ENCODE measurements at regions of chr1 and their contacts with region 1.

Region 1: DNA sequence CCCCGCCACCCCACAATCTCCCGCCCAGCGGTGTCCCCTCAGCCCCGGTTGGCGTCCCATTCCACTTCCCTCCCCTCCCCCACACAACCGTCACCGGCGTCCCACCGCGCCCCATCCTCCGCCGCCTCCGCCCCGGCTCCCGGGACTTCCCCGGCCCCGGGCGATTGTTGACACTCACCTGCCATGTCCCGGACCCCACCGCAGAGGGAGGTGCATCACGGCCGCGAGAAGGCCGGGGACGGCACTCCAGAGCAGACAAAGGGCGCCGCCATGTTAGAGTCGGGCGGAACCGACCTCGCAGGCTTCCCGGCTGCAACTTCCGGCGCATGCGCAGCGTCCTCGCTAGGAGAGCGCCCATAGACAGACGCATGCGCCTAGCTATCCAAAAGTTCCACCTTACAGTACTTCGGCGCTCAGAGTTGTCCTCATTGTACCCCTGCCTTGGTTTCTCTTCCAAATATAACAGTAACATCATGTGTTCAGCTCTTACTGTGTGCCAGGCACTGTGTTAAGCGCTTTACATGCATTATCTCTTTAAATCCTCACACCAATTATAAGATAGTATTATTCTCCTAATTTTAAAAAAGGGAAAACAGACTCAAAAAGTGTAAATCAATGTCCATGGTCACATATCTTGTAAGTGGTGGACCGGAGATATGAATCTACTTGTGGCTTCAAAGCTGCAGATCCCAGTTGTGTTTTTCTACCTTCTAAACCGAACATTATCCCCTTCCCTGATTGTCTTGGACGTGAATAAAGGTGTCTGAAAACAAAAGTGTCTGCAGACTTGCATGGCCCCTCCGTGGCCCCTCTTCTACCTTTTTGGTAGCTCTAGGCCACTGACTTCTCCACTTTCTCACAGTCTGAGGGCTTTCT is at the start of gene ZBTB17:
- DNase-seq: peak; percentile 95 to 99
- ATAC-seq: peak; percentile 88 to 93 (median 88)
- H3K4me3 ChIP-seq: peak within 1 kb of the TSS; percentile 79
- H3K4me3 Mint-ChIP-seq: peak within 1 kb of the TSS; percentile 95
- H3K27ac ChIP-seq: peak within 1 kb of the TSS; percentile 73
- H3K27ac Mint-ChIP-seq: peak within 1 kb of the TSS; percentile 87 to 92
- H3K4me1 ChIP-seq: peaks cover 13% of the 10 kb centered on the region
- H3K4me1 Mint-ChIP-seq: peaks cover 22 to 34% of the 10 kb centered on the region in 2 donors
- H3K27me3 ChIP-seq: no peaks in the 10 kb centered on the region
- H3K27me3 Mint-ChIP-seq: no peaks in the 10 kb centered on the region
- CTCF ChIP-seq: no peak
- total RNA-seq, gene ZBTB17: 86.0 to 100 (median 86.9) TPM

Region 2: GRCh38 chr1:15749399-15750291 is 226.4 kb before region 1 on chr1:
- intact Hi-C with region 1: no loop called
- DNase-seq: no peak
- ATAC-seq: no peak
- H3K4me3 ChIP-seq: no peak overlapping the region
- H3K4me3 Mint-ChIP-seq: no peak overlapping the region
- H3K27ac ChIP-seq: no peak overlapping the region
- H3K27ac Mint-ChIP-seq: no peak overlapping the region
- H3K4me1 ChIP-seq: no peaks in the 10 kb centered on the region
- H3K4me1 Mint-ChIP-seq: no peaks in the 10 kb centered on the region
- H3K27me3 ChIP-seq: no peaks in the 10 kb centered on the region
- H3K27me3 Mint-ChIP-seq: no peaks in the 10 kb centered on the region
- CTCF ChIP-seq: no peak

Region 3: DNA sequence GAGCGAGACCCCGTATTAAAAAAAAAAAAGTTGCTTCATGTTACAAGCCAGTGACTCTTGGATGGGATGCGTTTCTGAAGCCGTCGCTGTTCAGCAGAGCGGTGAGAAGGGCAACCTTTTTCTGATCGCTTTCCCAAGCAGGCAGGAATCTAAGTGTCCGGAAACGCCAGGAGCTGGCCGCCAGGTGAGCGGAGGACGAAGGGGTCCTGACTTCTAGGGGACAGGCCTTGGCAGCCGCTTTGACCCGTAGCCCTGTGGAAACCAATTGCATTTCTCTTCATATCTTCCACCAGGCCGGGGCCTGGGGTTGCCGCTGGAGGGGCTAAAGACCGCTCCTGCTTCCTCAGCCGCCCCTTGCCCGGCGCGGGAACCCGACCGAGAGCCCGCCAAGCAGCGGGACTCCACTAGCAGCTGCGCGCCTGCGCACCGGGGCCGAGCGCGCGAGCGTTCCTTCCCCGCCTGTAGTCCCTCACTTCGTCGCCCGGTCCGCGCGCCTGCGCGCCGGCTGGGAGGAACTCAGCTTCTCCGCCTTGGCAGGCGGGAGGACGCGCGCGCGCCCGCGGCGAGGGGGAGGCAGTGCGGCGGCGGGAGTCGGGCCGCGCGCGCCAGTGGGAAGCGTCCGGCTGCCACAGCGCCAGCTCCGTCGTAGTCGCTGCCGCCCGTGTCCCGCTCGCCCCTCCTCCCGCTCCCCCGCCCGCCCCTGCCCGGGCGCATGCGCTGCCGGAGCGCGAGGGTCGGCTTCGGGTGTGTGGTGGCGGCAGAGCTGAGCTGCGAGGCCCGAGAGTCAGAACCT is 128.7 kb before region 1 on chr1 and contains the start of gene SPEN:
- intact Hi-C with region 1: loop called (anchors 5 kb)
- DNase-seq: peak; percentile 95 to 99
- ATAC-seq: peak; percentile 80 to 95 (median 85)
- H3K4me3 ChIP-seq: peak within 1 kb of the TSS; percentile 98
- H3K4me3 Mint-ChIP-seq: peak within 1 kb of the TSS; percentile 98
- H3K27ac ChIP-seq: peak within 1 kb of the TSS; percentile 99
- H3K27ac Mint-ChIP-seq: peak within 1 kb of the TSS; percentile 95 to 96
- H3K4me1 ChIP-seq: peaks cover 37% of the 10 kb centered on the region
- H3K4me1 Mint-ChIP-seq: peaks cover 30% of the 10 kb centered on the region in 2 donors
- H3K27me3 ChIP-seq: no peaks in the 10 kb centered on the region
- H3K27me3 Mint-ChIP-seq: no peaks in the 10 kb centered on the region
- CTCF ChIP-seq: no peak
- total RNA-seq, gene SPEN: 98.1 to 114 (median 105) TPM

Region 4: DNA sequence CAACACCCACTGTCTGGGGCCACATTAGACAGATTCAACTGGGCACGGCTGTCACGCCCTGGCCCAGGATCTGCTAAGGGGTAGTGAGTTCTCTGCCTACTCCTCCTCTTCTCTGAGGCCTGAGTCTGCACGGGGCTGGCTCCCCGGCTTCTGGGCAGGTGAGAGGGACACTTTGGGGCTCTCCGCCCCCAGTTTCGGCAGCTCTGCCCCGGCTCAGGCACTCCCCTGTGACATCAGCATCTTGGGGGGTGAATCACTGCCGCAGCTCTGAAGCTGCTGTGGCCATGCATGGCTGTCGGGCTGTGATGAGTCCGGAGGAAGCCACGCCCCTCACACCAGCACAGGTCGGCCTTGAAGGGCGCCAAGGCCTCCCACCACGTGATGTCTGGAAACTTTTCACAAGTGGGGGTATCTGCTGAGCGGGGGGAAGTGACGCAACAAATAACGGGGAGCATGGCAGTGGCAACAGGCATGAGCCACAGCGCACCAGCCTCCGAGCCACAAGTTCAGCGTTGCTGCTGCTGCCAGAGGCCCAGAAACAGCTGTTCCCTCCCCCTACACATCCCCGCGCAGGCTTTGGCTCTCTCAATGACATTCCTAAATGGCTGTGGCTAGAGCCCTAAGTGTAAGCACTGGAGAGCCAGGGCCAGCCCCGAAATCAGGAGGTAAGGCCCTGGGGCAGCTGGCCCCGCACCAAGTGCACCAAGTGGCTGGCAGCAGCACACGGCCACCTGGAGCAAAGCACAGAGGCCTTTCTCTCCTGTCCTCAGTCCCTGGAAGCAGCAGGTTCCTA is 26.4 kb before region 1 on chr1:
- intact Hi-C with region 1: loop called (anchors 1 kb)
- DNase-seq: peak; percentile 87 to 97
- ATAC-seq: peak; percentile 90 to 96 (median 93)
- H3K4me3 ChIP-seq: peak overlapping the region; percentile 11
- H3K4me3 Mint-ChIP-seq: peak overlapping the region; percentile 50
- H3K27ac ChIP-seq: peak overlapping the region; percentile 95
- H3K27ac Mint-ChIP-seq: peak overlapping the region; percentile 87 to 93
- H3K4me1 ChIP-seq: peaks cover 56% of the 10 kb centered on the region
- H3K4me1 Mint-ChIP-seq: peaks cover 57 to 69% of the 10 kb centered on the region in 2 donors
- H3K27me3 ChIP-seq: no peaks in the 10 kb centered on the region
- H3K27me3 Mint-ChIP-seq: no peaks in the 10 kb centered on the region
- CTCF ChIP-seq: no peak